Activated CD4-positive, alpha-beta memory T cell treated with anti-CD3 and anti-CD28 coated beads, Interleukin-2, amount 10 ng/mL, durations not matched to agents 7 days and 5 days (primary cell): ENCODE measurements at regions of chr14 and their contacts with region 1.

Region 1: DNA sequence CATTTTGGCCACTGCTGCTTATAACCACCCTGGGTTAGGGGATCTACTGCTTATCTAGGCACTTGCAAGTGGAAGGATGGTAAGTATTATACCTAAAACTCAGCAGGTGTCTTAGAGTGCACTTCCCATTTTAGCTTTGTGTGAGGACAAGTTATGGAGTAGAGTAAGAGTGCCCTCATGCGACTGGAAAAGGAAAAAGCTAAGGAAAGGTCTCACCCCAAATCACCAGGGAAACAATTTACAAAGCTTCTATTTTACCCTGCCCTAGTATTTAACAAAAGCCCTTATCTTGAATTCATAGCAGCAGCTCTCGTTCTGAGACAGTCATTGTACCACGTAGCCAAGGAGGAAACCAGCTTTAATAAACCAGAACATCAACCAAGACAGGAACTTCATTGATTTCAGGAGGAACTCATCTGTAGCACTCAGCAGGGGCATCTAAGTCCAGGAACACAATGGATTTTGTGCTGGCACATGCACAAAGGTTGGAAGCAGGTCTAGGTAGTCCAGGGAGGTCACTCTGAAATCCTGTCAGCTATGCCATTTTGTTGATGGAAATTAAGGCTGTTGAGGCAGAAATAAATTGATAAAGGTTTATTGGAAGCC is 2.9 kb downstream of the RDH12 start:
- DNase-seq: peak; percentile 30
- H3K4me3 Mint-ChIP-seq: no peak overlapping the region
- H3K27ac Mint-ChIP-seq: no peak overlapping the region
- H3K4me1 Mint-ChIP-seq: no peaks in the 10 kb centered on the region
- H3K27me3 Mint-ChIP-seq: peaks cover 14% of the 10 kb centered on the region

Region 2: GRCh38 chr14:67426983-67427606 is 277.5 kb before region 1 on chr14:
- CTCF ChIA-PET with region 1: interaction called, 37 read pairs
- POLR2A ChIA-PET with region 1: interaction called, 5 read pairs
- DNase-seq: peak; percentile 76
- H3K4me3 Mint-ChIP-seq: no peak overlapping the region
- H3K27ac Mint-ChIP-seq: no peak overlapping the region
- H3K4me1 Mint-ChIP-seq: peaks cover 5% of the 10 kb centered on the region
- H3K27me3 Mint-ChIP-seq: peaks cover 37% of the 10 kb centered on the region

Region 3: GRCh38 chr14:67571272-67571850 is 133.2 kb before region 1 on chr14:
- CTCF ChIA-PET with region 1: interaction called, 19 read pairs
- POLR2A ChIA-PET with region 1: no interaction called
- DNase-seq: peak; percentile 71
- H3K4me3 Mint-ChIP-seq: no peak overlapping the region
- H3K27ac Mint-ChIP-seq: no peak overlapping the region
- H3K4me1 Mint-ChIP-seq: peaks cover 6% of the 10 kb centered on the region
- H3K27me3 Mint-ChIP-seq: no peaks in the 10 kb centered on the region

Region 4: GRCh38 chr14:67599698-67600561 is 104.7 kb before region 1 on chr14 and contains the start of gene PIGH:
- CTCF ChIA-PET with region 1: interaction called, 30 read pairs
- POLR2A ChIA-PET with region 1: interaction called, 7 read pairs
- DNase-seq: peak; percentile 95
- H3K4me3 Mint-ChIP-seq: peak within 1 kb of the TSS; percentile 94
- H3K27ac Mint-ChIP-seq: peak within 1 kb of the TSS; percentile 80
- H3K4me1 Mint-ChIP-seq: peaks cover 33% of the 10 kb centered on the region
- H3K27me3 Mint-ChIP-seq: peaks cover 2% of the 10 kb centered on the region
- total RNA-seq, gene PIGH: 15.7 to 16.4 TPM

Region 5: DNA sequence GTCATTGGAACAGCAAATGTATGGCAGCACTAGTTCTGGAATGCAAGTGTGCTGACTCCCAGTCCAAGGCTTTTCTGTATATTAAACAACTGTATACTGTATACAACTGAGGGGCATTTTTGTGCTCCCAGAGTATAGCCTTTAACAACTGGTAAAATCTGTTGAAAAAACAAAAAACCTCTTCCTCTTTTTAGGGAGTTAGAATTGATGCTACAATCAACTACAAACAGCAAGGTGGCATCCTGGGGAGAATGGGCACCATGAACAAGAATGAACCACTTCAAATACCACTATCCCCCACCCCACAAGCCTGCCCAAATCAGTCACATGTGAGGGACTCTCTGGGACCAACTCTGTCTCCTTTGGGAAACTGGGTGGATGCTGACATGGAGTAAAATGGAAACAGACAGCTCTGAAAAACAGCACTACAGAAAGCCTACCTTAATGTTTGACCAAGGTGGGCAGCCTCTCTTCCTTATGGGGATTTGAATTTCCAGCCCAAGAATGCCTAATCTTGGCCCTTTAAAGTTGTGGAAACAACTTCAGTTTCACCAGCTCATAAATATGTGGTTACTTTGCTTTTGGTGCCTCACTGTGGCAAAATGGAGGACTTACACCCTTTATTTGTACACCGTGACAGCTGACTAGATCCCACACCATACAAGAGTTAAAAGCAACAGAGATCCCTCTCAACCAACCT is 37.7 kb before region 1 on chr14:
- CTCF ChIA-PET with region 1: interaction called, 15 read pairs
- POLR2A ChIA-PET with region 1: no interaction called
- DNase-seq: no peak
- H3K4me3 Mint-ChIP-seq: no peak overlapping the region
- H3K27ac Mint-ChIP-seq: peak overlapping the region; percentile 16
- H3K4me1 Mint-ChIP-seq: peaks cover 36% of the 10 kb centered on the region
- H3K27me3 Mint-ChIP-seq: no peaks in the 10 kb centered on the region